GM12878 (cell line): ENCODE measurements at regions of chr4 and their contacts with region 1.

Region 1: GRCh38 chr4:103008875-103009729 is 10.4 kb downstream of the SLC9B1 start:
- DNase-seq: peak; percentile 46
- ATAC-seq: peak; percentile 96
- H3K4me3 ChIP-seq: no peak overlapping the region
- H3K27ac ChIP-seq: no peak overlapping the region
- H3K4me1 ChIP-seq: no peaks in the 10 kb centered on the region
- H3K27me3 ChIP-seq: no peaks in the 10 kb centered on the region
- CTCF ChIP-seq: peak; percentile 59 to 82 (median 64)
- EP300 ChIP-seq: no peak
- POLR2A ChIP-seq: no peak
- RAD21 ChIP-seq: peak; percentile 97

Region 2: DNA sequence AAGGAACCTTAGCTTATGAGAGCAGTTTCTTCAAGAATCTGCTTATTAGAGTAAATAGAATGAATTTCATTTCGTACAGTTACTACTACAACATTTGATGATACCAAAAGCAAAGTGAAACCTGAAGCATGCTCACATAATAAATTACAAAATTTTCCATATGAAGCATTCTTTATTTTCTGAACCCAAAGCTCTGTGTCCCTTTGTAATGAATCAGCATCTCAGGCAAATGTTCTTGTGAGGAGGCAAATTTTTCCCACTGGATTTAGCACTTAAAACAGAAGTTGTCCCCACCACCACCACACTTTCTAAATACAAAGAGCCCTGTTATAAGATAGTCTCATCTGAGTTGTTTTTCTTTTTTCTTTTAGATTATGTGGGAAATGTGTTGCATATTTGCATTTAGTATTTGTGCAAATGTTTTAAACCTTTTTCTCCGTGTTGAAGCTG is 578.6 kb before region 1 on chr4:
- CTCF ChIA-PET with region 1: interaction called, 25 read pairs
- POLR2A ChIA-PET with region 1: no interaction called
- RAD21 ChIA-PET with region 1: interaction called, 10 read pairs
- SMC1A ChIA-PET with region 1: interaction called, 10 read pairs
- in situ Hi-C with region 1: loop called (anchors 10 kb)
- intact Hi-C with region 1: loop called (anchors 5 kb)
- DNase-seq: no peak
- ATAC-seq: peak; percentile 38
- H3K4me3 ChIP-seq: peak overlapping the region; percentile 83
- H3K27ac ChIP-seq: peak overlapping the region; percentile 61
- H3K4me1 ChIP-seq: no peaks in the 10 kb centered on the region
- H3K27me3 ChIP-seq: no peaks in the 10 kb centered on the region
- CTCF ChIP-seq: no peak
- EP300 ChIP-seq: no peak
- POLR2A ChIP-seq: no peak
- RAD21 ChIP-seq: no peak

Region 3: GRCh38 chr4:102449751-102450352 is 559.2 kb before region 1 on chr4:
- CTCF ChIA-PET with region 1: interaction called, 3 read pairs
- POLR2A ChIA-PET with region 1: no interaction called
- RAD21 ChIA-PET with region 1: interaction called, 4 read pairs
- SMC1A ChIA-PET with region 1: interaction called, 7 read pairs
- in situ Hi-C with region 1: no loop called
- intact Hi-C with region 1: loop called (anchors 2 kb)
- DNase-seq: peak; percentile 45
- ATAC-seq: peak; percentile 94
- H3K4me3 ChIP-seq: no peak overlapping the region
- H3K27ac ChIP-seq: no peak overlapping the region
- H3K4me1 ChIP-seq: no peaks in the 10 kb centered on the region
- H3K27me3 ChIP-seq: no peaks in the 10 kb centered on the region
- CTCF ChIP-seq: peak; percentile 60 to 85 (median 63); a peak in 5 of 6 replicates
- EP300 ChIP-seq: no peak
- POLR2A ChIP-seq: no peak
- RAD21 ChIP-seq: peak; percentile 98

Region 4: DNA sequence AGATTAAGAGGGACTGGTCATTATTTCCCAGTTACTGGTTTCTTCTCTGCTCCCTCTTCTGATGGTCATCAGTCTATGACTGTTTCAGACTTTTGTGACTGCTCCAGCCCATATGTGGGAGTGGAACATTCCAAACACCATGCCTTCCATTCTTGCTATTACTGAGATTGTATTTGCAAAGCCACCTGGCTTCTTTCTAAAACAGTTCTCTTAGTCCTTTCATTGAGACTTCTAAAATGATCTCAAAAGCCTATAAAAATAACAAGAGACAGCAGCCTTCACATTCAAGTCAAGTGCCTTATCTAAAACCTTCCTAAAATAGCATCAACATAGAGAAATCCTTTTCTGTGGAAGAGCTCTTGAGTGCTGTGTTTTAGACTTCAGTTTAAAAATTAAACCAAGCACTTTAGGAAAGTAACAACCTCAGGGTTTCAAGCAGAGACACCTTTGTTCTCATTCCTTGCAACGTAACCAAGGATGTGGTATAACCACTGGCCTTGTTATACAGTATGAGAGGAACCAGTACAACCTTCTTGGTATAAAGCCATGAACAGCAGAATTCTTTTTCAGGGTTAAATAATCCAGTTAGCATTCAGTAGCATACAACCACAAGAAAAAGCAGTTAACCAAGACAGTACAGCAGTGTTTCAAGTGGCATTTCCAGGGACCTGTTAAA is 410.9 kb before region 1 on chr4:
- CTCF ChIA-PET with region 1: no interaction called
- POLR2A ChIA-PET with region 1: no interaction called
- RAD21 ChIA-PET with region 1: no interaction called
- SMC1A ChIA-PET with region 1: no interaction called
- in situ Hi-C with region 1: no loop called
- intact Hi-C with region 1: no loop called
- DNase-seq: no peak
- ATAC-seq: peak; percentile 76
- H3K4me3 ChIP-seq: no peak overlapping the region
- H3K27ac ChIP-seq: peak overlapping the region; percentile 19
- H3K4me1 ChIP-seq: peaks cover 13% of the 10 kb centered on the region; the same call in 1 of the 2 replicates
- H3K27me3 ChIP-seq: no peaks in the 10 kb centered on the region
- CTCF ChIP-seq: no peak
- EP300 ChIP-seq: no peak
- POLR2A ChIP-seq: no peak
- RAD21 ChIP-seq: no peak

Region 5: DNA sequence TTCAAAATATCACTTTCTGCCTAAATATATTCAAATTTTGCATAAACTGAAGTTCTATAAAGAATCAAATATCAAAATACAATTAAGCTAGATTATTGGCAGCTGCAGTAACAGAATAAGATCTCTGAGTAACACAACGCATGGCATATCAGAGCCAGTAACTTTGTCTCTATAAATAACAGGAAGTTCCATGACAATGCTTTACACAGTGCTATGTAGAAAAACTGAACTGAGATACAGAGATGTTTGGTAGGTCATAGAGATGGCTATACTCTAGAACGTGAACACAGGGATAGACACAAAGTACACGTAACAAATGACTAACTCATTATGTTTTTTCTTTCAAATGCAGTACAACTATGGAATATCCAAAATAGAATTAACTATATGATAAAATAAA is 199.9 kb before region 1 on chr4:
- CTCF ChIA-PET with region 1: no interaction called
- POLR2A ChIA-PET with region 1: no interaction called
- RAD21 ChIA-PET with region 1: interaction called, 3 read pairs
- SMC1A ChIA-PET with region 1: no interaction called
- in situ Hi-C with region 1: loop called (anchors 25 kb)
- intact Hi-C with region 1: loop called (anchors 5 kb)
- DNase-seq: no peak
- ATAC-seq: peak; percentile 80
- H3K4me3 ChIP-seq: no peak overlapping the region
- H3K27ac ChIP-seq: no peak overlapping the region
- H3K4me1 ChIP-seq: peaks cover 18% of the 10 kb centered on the region
- H3K27me3 ChIP-seq: no peaks in the 10 kb centered on the region
- CTCF ChIP-seq: no peak
- EP300 ChIP-seq: no peak
- POLR2A ChIP-seq: no peak
- RAD21 ChIP-seq: no peak

Region 6: DNA sequence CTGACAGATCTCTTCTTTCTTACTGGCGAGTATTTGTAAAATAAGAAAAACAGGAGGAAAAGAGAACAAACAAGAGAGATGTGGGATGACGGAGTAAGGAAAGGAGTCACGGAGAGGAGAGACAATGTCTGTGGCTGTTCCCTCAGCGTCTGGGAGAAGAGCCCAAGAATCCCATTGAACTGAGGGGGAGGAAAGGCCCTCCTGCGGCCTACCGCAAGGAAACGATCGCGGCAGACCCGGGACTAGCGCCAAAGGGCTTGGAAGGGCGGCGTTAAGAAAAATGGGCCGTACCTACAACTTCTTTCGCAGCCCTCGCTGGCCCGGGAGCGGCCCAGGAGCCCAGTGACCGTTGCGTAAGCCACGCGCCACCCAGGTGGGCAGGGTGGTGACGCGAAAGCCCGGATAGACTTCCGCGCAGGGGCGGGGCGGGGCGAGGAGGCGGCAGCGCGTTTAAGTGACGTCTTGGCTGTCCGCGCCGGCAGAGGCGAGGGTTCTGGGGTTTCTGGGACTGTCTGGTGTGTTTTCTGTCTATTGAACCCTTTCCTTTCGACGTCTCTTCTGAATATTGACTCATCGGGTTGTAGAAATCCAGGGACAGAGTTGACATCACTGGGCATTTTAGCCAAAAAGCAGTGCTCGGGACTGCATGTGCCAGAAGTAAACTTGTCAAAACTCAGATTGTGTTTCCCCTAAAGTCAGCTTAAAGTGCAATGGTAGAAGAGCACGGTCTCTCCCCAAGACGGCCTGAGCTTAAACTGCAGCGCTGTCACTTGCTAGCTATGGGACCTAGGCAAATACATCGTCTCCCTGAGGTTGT is 10.4 kb after region 1 on chr4 and contains the start of gene SLC9B1:
- CTCF ChIA-PET with region 1: interaction called, 11 read pairs
- POLR2A ChIA-PET with region 1: interaction called, 3 read pairs
- RAD21 ChIA-PET with region 1: interaction called, 5 read pairs
- SMC1A ChIA-PET with region 1: interaction called, 5 read pairs
- in situ Hi-C with region 1: no loop called
- intact Hi-C with region 1: no loop called
- DNase-seq: peak; percentile 56
- ATAC-seq: peak; percentile 99
- H3K4me3 ChIP-seq: peak within 1 kb of the TSS; percentile 83
- H3K27ac ChIP-seq: peak within 1 kb of the TSS; percentile 87
- H3K4me1 ChIP-seq: peaks cover 5% of the 10 kb centered on the region; the same call in 1 of the 2 replicates
- H3K27me3 ChIP-seq: no peaks in the 10 kb centered on the region
- CTCF ChIP-seq: no peak
- EP300 ChIP-seq: no peak
- POLR2A ChIP-seq: peak; percentile 93
- RAD21 ChIP-seq: no peak
- polyA plus RNA-seq, gene SLC9B1: 1.9 to 2.1 TPM

Region 7: GRCh38 chr4:103060453-103061148 is 51.5 kb after region 1 on chr4:
- CTCF ChIA-PET with region 1: no interaction called
- POLR2A ChIA-PET with region 1: no interaction called
- RAD21 ChIA-PET with region 1: no interaction called
- SMC1A ChIA-PET with region 1: no interaction called
- in situ Hi-C with region 1: no loop called
- intact Hi-C with region 1: no loop called
- DNase-seq: no peak
- ATAC-seq: no peak
- H3K4me3 ChIP-seq: no peak overlapping the region
- H3K27ac ChIP-seq: no peak overlapping the region
- H3K4me1 ChIP-seq: no peaks in the 10 kb centered on the region
- H3K27me3 ChIP-seq: no peaks in the 10 kb centered on the region
- CTCF ChIP-seq: no peak
- EP300 ChIP-seq: no peak
- POLR2A ChIP-seq: no peak
- RAD21 ChIP-seq: no peak